Activated T-helper 1 cell treated with anti-CD3 and anti-CD28 coated beads, Interleukin-12 subunit alpha, Interleukin-12 subunit beta, Interleukin-2, Interleukin-4 antibody, amounts not matched to agents 30 ng/mL and 10 ng/mL and 1 ng/mL, durations not matched to agents 14 hours and 24 hours and 36 hours (primary cell): ENCODE measurements at regions of chr12 and their contacts with region 1.

Region 1: GRCh38 chr12:75738486-75738885 is 227.1 kb upstream of the KRR1 start:
- DNase-seq: peak; percentile 9
- H3K4me3 Mint-ChIP-seq: no peak overlapping the region
- H3K27ac Mint-ChIP-seq: peak overlapping the region; percentile 53
- H3K4me1 Mint-ChIP-seq: peaks cover 22% of the 10 kb centered on the region
- H3K27me3 Mint-ChIP-seq: peaks cover 5% of the 10 kb centered on the region

Region 2: DNA sequence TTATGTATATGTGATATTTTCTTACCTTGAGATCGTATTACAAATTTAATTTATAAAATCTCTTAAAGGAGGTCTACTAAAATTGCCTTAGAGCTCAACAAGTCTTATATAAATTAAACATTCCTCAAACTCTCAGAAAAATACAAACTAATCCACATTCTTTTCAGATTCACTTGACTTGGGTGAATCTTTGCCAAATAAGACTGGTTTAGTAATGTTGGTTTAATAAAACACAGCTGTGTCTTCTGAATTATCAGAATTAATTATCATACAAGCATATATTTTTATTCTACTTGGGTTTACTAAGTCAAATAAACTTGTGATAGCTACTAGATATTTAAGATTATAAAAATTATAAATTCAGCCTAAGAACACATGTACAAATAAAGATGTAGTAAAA is 334.3 kb before region 1 on chr12:
- intact Hi-C with region 1: no loop called
- DNase-seq: no peak
- H3K4me3 Mint-ChIP-seq: no peak overlapping the region
- H3K27ac Mint-ChIP-seq: no peak overlapping the region
- H3K4me1 Mint-ChIP-seq: no peaks in the 10 kb centered on the region
- H3K27me3 Mint-ChIP-seq: peaks cover 5% of the 10 kb centered on the region

Region 3: GRCh38 chr12:75611041-75611440 is 127.4 kb before region 1 on chr12:
- intact Hi-C with region 1: no loop called
- DNase-seq: no peak
- H3K4me3 Mint-ChIP-seq: no peak overlapping the region
- H3K27ac Mint-ChIP-seq: no peak overlapping the region
- H3K4me1 Mint-ChIP-seq: no peaks in the 10 kb centered on the region
- H3K27me3 Mint-ChIP-seq: peaks cover 42% of the 10 kb centered on the region

Region 4: GRCh38 chr12:75628916-75629315 is 109.6 kb before region 1 on chr12:
- intact Hi-C with region 1: no loop called
- DNase-seq: no peak
- H3K4me3 Mint-ChIP-seq: no peak overlapping the region
- H3K27ac Mint-ChIP-seq: no peak overlapping the region
- H3K4me1 Mint-ChIP-seq: no peaks in the 10 kb centered on the region
- H3K27me3 Mint-ChIP-seq: peaks cover 15% of the 10 kb centered on the region

Region 5: GRCh38 chr12:75641031-75641780 is 97.3 kb before region 1 on chr12:
- intact Hi-C with region 1: loop called (anchors 2 kb)
- DNase-seq: peak; percentile 32
- H3K4me3 Mint-ChIP-seq: peak overlapping the region; percentile 19
- H3K27ac Mint-ChIP-seq: peak overlapping the region; percentile 89
- H3K4me1 Mint-ChIP-seq: peaks cover 34% of the 10 kb centered on the region
- H3K27me3 Mint-ChIP-seq: no peaks in the 10 kb centered on the region

Region 6: GRCh38 chr12:75722714-75723200 is 15.7 kb before region 1 on chr12:
- intact Hi-C with region 1: loop called (anchors 2 kb)
- DNase-seq: peak; percentile 29
- H3K4me3 Mint-ChIP-seq: peak overlapping the region; percentile 37
- H3K27ac Mint-ChIP-seq: peak overlapping the region; percentile 81
- H3K4me1 Mint-ChIP-seq: peaks cover 16% of the 10 kb centered on the region
- H3K27me3 Mint-ChIP-seq: peaks cover 3% of the 10 kb centered on the region

Region 7: GRCh38 chr12:75750716-75751306 is 12.3 kb after region 1 on chr12:
- intact Hi-C with region 1: no loop called
- DNase-seq: no peak
- H3K4me3 Mint-ChIP-seq: no peak overlapping the region
- H3K27ac Mint-ChIP-seq: no peak overlapping the region
- H3K4me1 Mint-ChIP-seq: peaks cover 15% of the 10 kb centered on the region
- H3K27me3 Mint-ChIP-seq: peaks cover 4% of the 10 kb centered on the region

Region 8: DNA sequence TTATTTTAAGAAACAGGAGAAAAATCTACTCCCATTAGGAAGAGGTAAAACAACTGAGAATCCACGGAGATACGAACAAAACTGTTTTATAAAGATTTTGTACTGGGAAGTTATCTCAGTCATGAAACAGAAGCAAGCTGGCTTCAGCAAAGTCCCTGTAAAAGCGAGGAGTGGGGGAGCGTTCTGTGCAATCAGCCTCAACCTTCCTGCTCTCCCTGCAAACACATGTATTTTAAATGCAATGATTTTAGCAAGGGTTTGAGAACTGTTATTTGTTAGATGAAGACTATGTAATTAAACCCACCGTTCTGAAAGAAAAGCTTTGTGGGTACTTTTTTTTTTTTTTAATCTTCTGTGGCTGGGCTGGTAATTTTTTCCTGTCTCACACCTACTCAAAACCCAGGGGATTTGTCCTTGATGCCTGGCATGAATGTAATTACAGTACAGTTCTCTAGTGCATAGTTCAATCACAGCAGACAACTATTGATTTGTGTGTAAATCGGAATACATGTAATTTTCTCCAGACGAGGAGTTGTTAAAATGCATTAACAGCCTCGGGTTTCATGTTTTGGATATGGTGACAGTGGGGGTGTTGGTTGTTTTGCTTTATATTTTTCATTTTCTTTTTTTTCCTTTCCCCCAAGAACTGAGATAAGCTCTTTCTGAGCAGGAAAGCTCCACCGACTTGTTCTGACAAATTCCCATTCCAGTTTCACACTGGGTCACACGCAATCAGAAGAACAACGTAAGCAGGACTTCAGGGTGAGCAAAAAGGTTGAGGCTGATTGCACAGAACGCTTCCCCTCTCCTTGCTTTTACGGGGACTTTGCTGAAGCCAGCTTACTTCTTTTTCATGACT is 139.5 kb after region 1 on chr12:
- intact Hi-C with region 1: loop called (anchors 5 kb)
- DNase-seq: no peak
- H3K4me3 Mint-ChIP-seq: no peak overlapping the region
- H3K27ac Mint-ChIP-seq: no peak overlapping the region
- H3K4me1 Mint-ChIP-seq: peaks cover 25% of the 10 kb centered on the region
- H3K27me3 Mint-ChIP-seq: peaks cover 32% of the 10 kb centered on the region

Region 9: DNA sequence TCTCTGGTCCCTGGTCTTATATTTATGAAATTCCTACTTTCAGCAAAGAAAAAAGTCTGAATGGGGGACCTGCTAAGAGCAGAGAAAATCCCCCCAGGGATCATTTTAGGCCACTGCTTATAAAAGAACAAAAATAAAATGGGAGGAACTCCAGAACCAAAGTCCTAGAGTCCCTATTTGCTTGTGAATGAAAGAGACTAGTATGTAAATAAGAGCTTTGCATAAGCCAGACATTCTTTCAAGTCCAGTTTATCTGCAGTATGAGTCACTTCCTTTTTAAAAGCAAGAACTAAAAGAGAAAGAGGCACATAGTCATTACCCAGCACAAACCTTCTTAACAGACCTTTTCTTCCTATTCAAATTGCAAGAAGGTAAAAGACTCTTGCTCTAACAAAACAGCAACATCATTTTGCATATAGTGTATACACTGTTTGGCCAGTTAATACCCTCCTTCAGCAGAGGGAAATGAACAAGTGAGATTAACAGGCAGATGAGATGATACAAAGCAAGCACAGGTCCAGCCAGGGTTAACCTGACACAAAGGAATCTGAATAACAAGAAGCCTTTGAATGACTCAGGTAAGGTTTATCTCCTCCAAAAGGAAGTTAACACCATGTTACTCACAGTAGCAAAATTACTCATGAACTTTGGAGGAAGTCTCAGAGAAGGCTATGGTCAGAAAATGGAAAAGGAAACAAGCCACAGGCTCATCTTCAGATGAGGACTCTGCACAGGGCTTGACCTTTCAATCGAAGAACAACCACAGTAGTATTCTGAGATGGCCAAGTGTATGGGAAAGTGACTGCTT is 205.8 kb after region 1 on chr12:
- intact Hi-C with region 1: loop called (anchors 1 kb)
- DNase-seq: peak; percentile 27
- H3K4me3 Mint-ChIP-seq: peak overlapping the region; percentile 65
- H3K27ac Mint-ChIP-seq: peak overlapping the region; percentile 98
- H3K4me1 Mint-ChIP-seq: peaks cover 30% of the 10 kb centered on the region
- H3K27me3 Mint-ChIP-seq: no peaks in the 10 kb centered on the region